ENCODE measurements at regions of chr6 and their contacts with region 1.

Region 1: DNA sequence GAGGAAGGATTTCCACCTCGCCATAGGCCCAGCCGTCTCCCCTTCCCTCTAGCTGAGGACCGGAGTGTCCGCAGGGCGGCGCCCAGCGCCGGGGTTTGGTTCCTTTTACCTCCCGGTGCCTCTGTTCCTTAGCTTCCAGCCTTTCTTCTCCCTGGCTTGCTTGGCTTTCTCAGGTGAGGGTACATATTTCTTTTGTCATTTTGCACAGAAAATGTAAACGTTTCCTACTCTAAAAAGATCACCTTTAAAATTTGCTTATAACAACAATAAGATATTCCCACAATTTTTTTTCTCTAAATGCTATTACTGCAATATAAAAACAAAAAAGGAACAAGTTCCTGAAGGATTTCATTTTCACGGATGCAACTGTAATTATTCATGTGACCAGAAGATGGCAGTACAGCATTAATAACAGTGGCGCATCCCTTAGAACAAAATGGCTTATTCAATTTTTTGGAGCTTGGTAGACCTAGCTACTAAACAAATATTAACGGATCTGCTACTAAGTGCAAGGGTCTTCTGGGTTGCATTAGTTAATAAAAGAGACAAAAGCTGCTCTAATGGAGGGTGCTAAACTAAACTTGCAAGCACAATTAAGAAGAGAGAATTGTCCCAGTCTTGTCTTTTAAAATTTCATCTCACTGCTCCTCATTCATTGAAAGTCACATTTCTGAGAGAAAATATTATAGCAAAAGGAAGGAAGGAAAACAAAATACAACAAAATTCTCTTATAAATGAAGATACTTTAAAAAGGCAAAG is 172.9 kb downstream of the ADGRG6 start:
- DNase-seq: peak; percentile 48
- ATAC-seq: no peak
- H3K4me3 ChIP-seq: no peak overlapping the region
- H3K4me3 Mint-ChIP-seq: no peak overlapping the region
- H3K27ac ChIP-seq: no peak overlapping the region
- H3K27ac Mint-ChIP-seq: no peak overlapping the region
- H3K4me1 ChIP-seq: no peaks in the 10 kb centered on the region
- H3K4me1 Mint-ChIP-seq: no peaks in the 10 kb centered on the region
- H3K27me3 ChIP-seq: peaks cover 0 to 3% (median 0%) of the 10 kb centered on the region in 4 experiments
- H3K27me3 Mint-ChIP-seq: peaks cover 7% of the 10 kb centered on the region
- CTCF ChIP-seq: peak; percentile 96

Region 2: DNA sequence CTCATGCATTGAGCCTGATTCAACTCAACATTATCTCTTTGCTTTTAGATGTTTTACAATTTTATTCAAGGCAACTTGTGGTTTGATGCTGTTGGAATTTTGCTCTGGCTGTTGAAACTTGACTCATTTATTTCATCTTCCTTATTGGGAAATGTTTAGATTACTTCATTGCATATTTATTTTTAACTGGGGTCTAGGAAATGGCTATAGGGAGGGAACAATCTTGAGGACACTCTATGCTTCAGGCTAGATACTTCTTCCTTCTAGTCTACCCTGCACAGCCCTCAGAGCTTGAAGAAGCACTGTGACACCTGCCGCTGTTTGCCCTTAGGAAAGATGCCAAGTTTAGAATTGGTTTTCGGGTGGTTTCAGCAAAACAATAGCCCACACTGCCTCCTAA is 10.5 kb after region 1 on chr6:
- CTCF ChIA-PET with region 1: interaction called, 21 read pairs
- POLR2A ChIA-PET with region 1: no interaction called
- intact Hi-C with region 1: no loop called
- DNase-seq: no peak
- ATAC-seq: no peak
- H3K4me3 ChIP-seq: no peak overlapping the region
- H3K4me3 Mint-ChIP-seq: no peak overlapping the region
- H3K27ac ChIP-seq: no peak overlapping the region
- H3K27ac Mint-ChIP-seq: no peak overlapping the region
- H3K4me1 ChIP-seq: no peaks in the 10 kb centered on the region
- H3K4me1 Mint-ChIP-seq: no peaks in the 10 kb centered on the region
- H3K27me3 ChIP-seq: peaks cover 0 to 6% (median 1%) of the 10 kb centered on the region in 4 experiments
- H3K27me3 Mint-ChIP-seq: no peaks in the 10 kb centered on the region
- CTCF ChIP-seq: no peak

Region 3: DNA sequence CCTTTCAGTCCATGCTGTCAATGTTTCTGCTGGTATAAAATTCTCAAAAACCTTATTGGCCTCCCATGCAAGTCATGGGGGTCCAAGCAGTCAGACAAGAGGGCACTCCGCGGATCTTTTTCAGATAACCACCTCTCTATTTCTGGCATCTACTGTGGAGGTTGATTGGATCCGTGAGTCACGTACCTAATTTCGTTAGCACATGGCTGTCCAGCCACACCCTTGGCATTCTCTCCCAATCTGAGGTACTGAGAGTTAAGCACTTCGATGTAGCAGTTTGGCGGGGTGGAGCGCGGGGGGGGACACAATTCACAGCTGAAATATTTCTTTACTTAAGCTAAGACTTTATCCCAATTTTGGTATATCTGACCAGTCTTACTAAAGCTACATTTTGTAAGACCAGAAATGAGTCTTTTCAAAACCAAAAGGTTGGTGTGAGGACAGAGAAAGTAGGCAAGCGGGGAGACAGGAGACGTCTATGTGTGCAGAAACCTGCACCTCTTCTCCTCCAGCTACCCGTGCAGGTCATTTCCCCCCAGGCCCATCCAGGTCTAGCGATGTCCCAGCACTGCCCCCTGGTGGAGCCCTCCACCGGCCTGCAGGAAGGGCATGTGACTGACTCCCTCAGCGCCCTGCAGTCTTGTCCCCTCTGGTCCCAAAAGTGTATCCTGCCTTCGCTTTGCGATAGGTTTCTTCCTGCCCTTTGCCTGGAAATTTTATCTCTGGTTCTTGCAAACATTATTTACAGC is 862.7 kb after region 1 on chr6:
- CTCF ChIA-PET with region 1: interaction called, 13 read pairs
- POLR2A ChIA-PET with region 1: no interaction called
- intact Hi-C with region 1: loop called (anchors 10 kb)
- DNase-seq: peak; percentile 48
- ATAC-seq: peak; percentile 39
- H3K4me3 ChIP-seq: no peak overlapping the region
- H3K4me3 Mint-ChIP-seq: no peak overlapping the region
- H3K27ac ChIP-seq: no peak overlapping the region
- H3K27ac Mint-ChIP-seq: no peak overlapping the region
- H3K4me1 ChIP-seq: no peaks in the 10 kb centered on the region
- H3K4me1 Mint-ChIP-seq: no peaks in the 10 kb centered on the region
- H3K27me3 ChIP-seq: no peaks in the 10 kb centered on the region
- H3K27me3 Mint-ChIP-seq: no peaks in the 10 kb centered on the region
- CTCF ChIP-seq: peak; percentile 59

Measured in B cell (primary cell).